Activated CD4-positive, alpha-beta memory T cell treated with anti-CD3 and anti-CD28 coated beads, Interleukin-2, amount 10 ng/mL, durations not matched to agents 7 days and 5 days (primary cell): ENCODE measurements at regions of chr20 and their contacts with region 1.

Region 1: GRCh38 chr20:63641792-63642544 is 11.3 kb downstream of the STMN3 start:
- DNase-seq: peak; percentile 97
- H3K4me3 Mint-ChIP-seq: peak overlapping the region; percentile 69
- H3K27ac Mint-ChIP-seq: peak overlapping the region; percentile 71
- H3K4me1 Mint-ChIP-seq: peaks cover 31% of the 10 kb centered on the region
- H3K27me3 Mint-ChIP-seq: peaks cover 3% of the 10 kb centered on the region

Region 2: DNA sequence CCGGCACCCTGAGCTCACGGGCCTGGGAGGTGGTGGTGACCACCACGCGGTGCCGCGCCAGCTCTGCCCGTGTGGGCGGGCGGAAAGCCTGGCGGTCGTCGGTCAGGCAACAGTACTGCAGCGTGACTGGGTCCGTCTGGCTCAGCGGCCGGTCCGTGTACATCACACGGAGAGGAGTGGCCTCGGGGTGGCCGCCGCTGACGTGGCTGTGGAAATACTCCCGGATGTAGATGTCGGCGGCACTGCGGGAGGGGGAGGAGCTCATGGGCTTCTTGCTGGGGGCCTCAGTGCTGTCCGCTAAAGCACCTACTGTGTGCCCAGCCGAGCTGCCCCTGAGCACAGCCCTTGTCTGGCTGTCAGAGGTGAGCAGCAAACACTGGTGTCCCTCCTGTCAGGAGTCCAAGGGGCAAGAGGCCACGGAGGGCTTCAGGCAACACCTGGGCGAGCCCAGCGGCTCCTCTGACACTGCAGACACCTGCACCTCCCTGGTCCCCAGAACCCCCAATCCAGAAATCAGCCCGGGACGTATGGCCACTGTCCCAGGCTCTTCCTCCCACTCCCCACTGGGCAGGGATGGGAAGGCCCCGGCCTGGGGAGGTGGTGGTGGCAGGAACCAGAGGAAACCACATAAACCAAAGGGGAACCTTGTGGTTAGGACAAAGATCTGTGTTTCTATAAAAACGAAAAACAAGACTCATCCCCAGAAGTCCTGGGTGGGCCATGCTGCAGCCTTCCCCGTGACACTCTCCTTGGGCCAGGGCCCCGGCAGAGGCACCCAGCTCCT is 74.4 kb before region 1 on chr20:
- CTCF ChIA-PET with region 1: interaction called, 10 read pairs
- POLR2A ChIA-PET with region 1: interaction called, 11 read pairs
- DNase-seq: peak; percentile 76
- H3K4me3 Mint-ChIP-seq: peak overlapping the region; percentile 63
- H3K27ac Mint-ChIP-seq: peak overlapping the region; percentile 73
- H3K4me1 Mint-ChIP-seq: peaks cover 32% of the 10 kb centered on the region
- H3K27me3 Mint-ChIP-seq: no peaks in the 10 kb centered on the region

Region 3: DNA sequence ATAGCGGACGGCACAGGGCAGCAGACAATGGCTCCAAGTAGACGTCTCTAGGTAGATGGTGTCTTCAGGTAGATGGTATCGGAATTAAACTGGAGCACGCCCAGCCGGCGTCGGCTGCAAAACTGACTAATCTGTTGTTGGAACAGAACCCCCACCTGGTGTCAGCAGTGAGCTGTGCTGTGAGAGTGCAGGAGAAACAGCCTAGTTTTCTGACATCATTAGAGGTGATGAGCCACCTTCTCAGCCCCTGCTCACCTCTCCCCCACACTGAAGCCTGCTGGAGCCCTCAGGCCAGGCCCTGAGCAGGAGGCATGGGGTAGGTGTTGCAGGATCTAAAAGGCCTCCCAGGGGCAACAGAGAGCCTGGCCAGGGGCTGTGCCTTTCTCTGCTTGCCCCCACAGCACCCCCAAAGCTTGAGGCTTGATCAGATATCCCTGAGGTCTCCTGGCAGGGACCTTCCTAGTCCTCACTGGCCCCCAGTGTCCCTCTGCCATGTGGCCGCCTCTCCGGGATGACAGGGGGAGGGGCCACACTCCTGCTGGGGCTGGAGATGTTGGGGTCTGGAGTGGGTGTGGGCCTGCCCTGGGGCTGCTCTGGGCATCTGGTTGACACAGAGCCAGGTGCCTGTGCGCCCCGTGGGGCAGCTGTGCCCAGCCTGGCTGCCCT is 61.0 kb before region 1 on chr20:
- CTCF ChIA-PET with region 1: interaction called, 14 read pairs
- POLR2A ChIA-PET with region 1: interaction called, 5 read pairs
- DNase-seq: peak; percentile 80
- H3K4me3 Mint-ChIP-seq: no peak overlapping the region
- H3K27ac Mint-ChIP-seq: no peak overlapping the region
- H3K4me1 Mint-ChIP-seq: peaks cover 2% of the 10 kb centered on the region
- H3K27me3 Mint-ChIP-seq: peaks cover 38% of the 10 kb centered on the region

Region 4: DNA sequence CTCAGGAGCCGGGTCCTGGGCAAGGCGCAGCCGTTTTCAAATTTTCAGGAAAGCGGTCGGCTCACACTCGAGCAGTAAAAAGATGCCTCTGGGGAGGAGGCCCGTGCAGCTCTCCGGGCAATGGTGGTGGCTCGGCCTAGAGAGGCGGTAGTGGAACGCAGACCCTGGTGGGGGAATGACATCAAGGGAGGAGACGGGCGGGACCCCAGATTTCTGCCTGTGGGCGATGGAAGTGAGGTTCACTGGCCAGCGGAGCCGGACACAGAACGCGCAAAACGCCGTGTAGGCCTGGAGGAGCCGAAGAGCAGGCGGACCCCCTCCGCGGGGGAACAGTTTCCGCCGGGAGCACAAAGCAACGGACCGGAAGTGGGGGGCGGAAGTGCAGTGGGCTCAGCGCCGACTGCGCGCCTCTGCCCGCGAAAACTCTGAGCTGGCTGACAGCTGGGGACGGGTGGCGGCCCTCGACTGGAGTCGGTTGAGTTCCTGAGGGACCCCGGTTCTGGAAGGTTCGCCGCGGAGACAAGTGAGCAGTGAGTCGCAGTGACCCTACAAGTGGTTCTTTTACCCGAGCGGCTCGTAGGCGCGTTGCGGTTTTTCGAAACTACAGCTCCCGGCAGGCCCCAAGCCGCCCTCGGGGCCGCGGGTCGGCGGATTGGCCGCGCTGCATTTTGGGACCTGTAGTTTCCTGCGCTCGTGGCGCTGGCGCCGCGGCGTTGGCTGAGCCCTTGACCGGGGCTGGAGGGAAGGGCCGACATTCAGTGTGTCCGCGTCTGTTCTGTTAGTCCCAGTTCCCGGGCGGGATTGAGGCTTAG is 16.2 kb after region 1 on chr20 and contains the start of gene RTEL1:
- CTCF ChIA-PET with region 1: interaction called, 22 read pairs
- POLR2A ChIA-PET with region 1: interaction called, 18 read pairs
- DNase-seq: peak; percentile 88
- H3K4me3 Mint-ChIP-seq: peak within 1 kb of the TSS; percentile 90
- H3K27ac Mint-ChIP-seq: peak within 1 kb of the TSS; percentile 85
- H3K4me1 Mint-ChIP-seq: peaks cover 38% of the 10 kb centered on the region
- H3K27me3 Mint-ChIP-seq: peaks cover 3% of the 10 kb centered on the region
- total RNA-seq, gene RTEL1: 29.2 to 30.0 TPM

Region 5: DNA sequence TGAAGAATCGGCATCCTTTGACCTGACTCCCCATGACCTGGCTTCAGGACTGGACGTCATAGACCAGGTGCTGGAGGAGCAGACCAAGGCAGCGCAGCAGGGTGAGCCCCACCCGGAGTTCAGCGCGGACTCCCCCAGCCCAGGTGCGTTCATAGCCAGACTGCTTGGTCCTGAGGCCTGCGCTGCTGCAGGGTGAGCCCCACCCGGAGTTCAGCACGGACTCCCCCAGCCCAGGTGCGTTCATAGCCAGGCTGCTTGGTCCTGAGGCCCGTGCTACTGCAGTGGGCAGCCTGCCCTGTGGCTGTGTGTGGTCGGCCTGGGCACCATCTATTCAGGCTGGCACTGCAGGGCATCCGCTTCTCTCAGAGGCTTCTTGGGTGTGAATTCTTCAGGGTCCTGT is 32.0 kb after region 1 on chr20:
- CTCF ChIA-PET with region 1: no interaction called
- POLR2A ChIA-PET with region 1: no interaction called
- DNase-seq: no peak
- H3K4me3 Mint-ChIP-seq: no peak overlapping the region
- H3K27ac Mint-ChIP-seq: no peak overlapping the region
- H3K4me1 Mint-ChIP-seq: no peaks in the 10 kb centered on the region
- H3K27me3 Mint-ChIP-seq: no peaks in the 10 kb centered on the region